A549 (cell line): ENCODE measurements at regions of chr9 and their contacts with region 1.

Region 1: GRCh38 chr9:129696938-129697650 is 31.6 kb downstream of the PRRX2 start:
- DNase-seq: peak; percentile 44 to 60
- ATAC-seq: peak; percentile 76 to 85
- H3K4me3 ChIP-seq: peak overlapping the region; percentile 64
- H3K27ac ChIP-seq: peak overlapping the region; percentile 97
- H3K4me1 ChIP-seq: peaks cover 13% of the 10 kb centered on the region
- CTCF ChIP-seq: no peak
- EP300 ChIP-seq: no peak
- POLR2A ChIP-seq: peak; percentile 43
- RAD21 ChIP-seq: no peak

Region 2: DNA sequence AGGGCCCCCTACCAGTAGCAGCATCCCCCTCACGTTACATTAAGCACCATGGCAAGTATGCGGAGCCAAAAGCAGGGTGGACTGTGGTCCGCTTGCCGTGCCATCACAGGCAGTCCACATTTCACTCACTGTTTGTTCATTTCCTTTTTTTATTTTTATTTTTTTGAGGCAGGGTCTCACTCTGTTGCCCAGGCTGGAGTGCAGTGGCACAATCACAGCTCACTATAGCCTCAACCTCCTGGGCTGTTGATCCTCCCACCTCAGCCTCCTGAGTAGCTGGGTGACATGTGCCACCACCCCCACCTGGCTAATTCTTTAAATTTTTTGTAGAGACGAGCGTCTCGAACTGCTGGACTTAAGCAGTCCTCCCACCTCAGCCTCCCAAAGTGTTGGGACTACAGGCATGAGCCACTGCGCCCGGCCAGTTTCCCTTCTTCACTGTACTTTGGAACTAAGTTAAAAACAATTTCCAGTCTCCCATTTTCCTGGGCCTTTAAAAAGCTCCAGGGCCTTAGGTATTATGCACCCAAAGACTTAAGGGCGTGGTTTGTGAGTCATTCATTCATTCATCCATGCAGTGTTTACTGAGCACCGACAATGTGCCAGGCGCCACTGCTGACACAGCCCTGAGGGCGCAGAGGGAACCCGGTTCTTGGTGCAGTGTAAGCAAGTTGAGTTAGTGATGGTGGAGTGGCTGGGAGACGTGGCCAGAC is 11.7 kb before region 1 on chr9:
- CTCF ChIA-PET with region 1: interaction called, 10 read pairs
- POLR2A ChIA-PET with region 1: no interaction called
- DNase-seq: peak; percentile 84
- ATAC-seq: peak; percentile 77 to 84
- H3K4me3 ChIP-seq: no peak overlapping the region
- H3K27ac ChIP-seq: peak overlapping the region; percentile 74 to 85
- H3K4me1 ChIP-seq: peaks cover 38% of the 10 kb centered on the region
- CTCF ChIP-seq: no peak
- EP300 ChIP-seq: no peak
- POLR2A ChIP-seq: no peak
- RAD21 ChIP-seq: no peak

Region 3: DNA sequence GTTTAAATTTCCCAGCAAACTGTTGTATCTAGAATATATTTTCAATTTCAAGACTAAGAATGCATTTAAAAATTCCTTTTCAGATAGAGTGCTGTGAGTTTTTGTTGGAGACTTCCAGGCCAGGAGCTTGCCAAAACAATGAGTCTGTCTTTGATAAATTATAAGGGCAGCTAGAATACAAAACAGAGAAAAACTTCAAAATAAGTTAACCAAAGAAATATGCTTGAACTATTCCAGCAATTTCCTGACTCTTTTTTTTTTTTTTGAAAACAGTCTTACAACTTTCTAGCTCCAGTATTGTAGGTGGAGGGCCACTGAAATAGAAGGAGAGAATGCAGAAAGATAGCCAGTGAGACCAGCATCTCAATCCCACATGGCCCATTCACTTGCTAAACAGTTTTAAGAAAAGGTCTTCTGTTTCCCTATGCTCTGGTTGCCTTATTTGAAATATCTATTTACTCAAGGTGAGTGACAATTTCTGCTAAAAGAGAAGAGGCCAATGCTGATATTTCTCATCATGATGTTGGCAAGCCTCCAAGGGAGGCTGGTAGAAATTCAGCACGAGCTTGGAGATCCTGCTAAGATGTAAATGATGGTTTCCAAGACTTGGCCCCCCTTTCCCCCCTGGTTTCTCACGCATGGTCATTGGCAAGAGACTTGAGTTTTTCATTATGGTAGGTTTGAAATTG is 241.3 kb after region 1 on chr9:
- CTCF ChIA-PET with region 1: no interaction called
- POLR2A ChIA-PET with region 1: no interaction called
- DNase-seq: no peak
- ATAC-seq: no peak
- H3K4me3 ChIP-seq: no peak overlapping the region
- H3K27ac ChIP-seq: no peak overlapping the region
- H3K4me1 ChIP-seq: 0 out of 3 replicates have a peak, but pooled peaks cover 4% of the 10 kb centered on the region
- CTCF ChIP-seq: no peak
- EP300 ChIP-seq: no peak
- POLR2A ChIP-seq: no peak
- RAD21 ChIP-seq: no peak

Region 4: DNA sequence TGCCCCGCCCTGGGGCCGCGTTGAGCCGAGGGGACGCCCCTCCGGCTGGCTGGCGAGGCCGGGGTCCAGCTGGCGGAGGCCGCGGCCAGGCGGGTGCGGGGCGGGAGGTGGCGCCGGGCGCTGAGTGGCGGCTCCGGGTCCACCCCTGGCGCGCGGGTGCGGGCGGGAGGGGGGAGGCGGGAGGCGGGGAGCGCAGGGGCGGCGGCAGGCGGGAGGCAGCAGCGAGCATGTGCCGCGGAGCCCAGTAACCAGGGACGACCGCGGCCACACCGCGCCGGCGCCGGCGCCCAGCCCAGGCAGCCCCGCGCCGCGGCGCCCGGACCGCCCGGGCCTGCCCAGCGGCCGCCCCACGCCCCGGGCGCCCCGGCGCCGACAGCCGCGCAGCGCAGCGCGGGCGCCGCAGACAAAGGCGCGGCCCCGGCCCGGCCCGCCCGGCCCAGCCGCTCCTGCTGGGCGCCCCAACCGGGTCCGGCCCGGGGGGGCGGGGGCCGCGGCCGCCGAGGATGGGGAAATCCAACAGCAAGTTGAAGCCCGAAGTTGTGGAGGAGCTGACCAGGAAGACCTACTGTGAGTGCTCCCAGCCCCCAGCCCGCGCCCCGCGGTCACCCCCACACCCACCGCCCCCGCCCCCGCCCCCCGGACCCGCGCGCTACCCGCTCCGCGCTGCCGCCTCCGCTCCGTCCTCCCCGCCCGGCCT is 475.2 kb after region 1 on chr9 and contains the start of gene NCS1:
- CTCF ChIA-PET with region 1: no interaction called
- POLR2A ChIA-PET with region 1: no interaction called
- DNase-seq: peak; percentile 53 to 90
- ATAC-seq: peak; percentile 80 to 82
- H3K4me3 ChIP-seq: peak within 1 kb of the TSS; percentile 86
- H3K27ac ChIP-seq: peak within 1 kb of the TSS; percentile 88 to 95
- H3K4me1 ChIP-seq: peaks cover 13% of the 10 kb centered on the region; the same call in 1 of the 3 replicates
- CTCF ChIP-seq: no peak
- EP300 ChIP-seq: no peak
- POLR2A ChIP-seq: no peak
- RAD21 ChIP-seq: no peak
- polyA plus RNA-seq, gene NCS1: 19.1 and 21.9 TPM in 2 replicates